Ascending aorta (tissue), 2 donors: ENCODE measurements at regions of chr16 and their contacts with region 1.

Region 1: DNA sequence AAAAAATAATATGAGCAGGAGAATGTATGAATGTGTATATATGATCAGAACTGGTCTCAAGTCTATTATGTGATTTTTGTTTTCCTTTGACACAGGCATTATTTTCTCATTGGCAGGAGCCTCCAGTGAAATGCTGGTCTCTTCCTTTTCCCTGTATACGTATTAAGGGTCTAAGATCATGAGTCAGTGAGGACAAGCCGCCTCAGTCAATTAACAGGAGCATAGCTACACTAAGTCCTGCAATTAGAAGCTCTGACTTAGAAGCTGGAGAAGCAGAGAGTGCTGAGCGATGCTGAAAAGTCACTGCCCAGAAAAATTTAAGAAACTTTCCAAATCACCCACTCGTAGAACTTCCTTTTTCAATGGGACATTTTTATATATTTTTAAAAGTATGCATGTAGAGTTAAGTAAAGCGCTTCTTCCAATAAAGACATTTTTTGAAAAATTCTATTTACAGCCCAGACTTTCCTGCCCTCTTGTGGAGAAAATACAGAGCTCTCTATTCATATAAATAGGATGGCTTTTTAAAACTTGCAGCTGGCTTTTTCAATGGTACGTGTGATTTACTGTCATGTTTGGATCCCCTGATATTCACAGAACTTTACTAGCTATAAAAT is 70.2 kb upstream of the PSMD7 start:
- DNase-seq: no peak
- H3K4me3 ChIP-seq: no peak overlapping the region
- H3K27ac ChIP-seq: no peak overlapping the region
- H3K4me1 ChIP-seq: no peaks in the 10 kb centered on the region
- H3K27me3 ChIP-seq: no peaks in the 10 kb centered on the region
- CTCF ChIP-seq: peak in 2 of 3 experiments; percentile 16 to 23

Region 2: GRCh38 chr16:74064120-74064735 is 162.2 kb before region 1 on chr16:
- intact Hi-C with region 1: loop called (anchors 5 kb)
- DNase-seq: no peak
- H3K4me3 ChIP-seq: no peak overlapping the region
- H3K27ac ChIP-seq: no peak overlapping the region
- H3K4me1 ChIP-seq: no peaks in the 10 kb centered on the region
- H3K27me3 ChIP-seq: no peaks in the 10 kb centered on the region
- CTCF ChIP-seq: no peak

Region 3: GRCh38 chr16:74169687-74170376 is 56.6 kb before region 1 on chr16:
- intact Hi-C with region 1: no loop called
- DNase-seq: no peak
- H3K4me3 ChIP-seq: peak overlapping the region; percentile 7 to 47
- H3K27ac ChIP-seq: no peak overlapping the region
- H3K4me1 ChIP-seq: no peaks in the 10 kb centered on the region
- H3K27me3 ChIP-seq: no peaks in the 10 kb centered on the region
- CTCF ChIP-seq: no peak

Region 4: GRCh38 chr16:74213372-74213771 is 13.1 kb before region 1 on chr16:
- intact Hi-C with region 1: no loop called
- DNase-seq: no peak
- H3K4me3 ChIP-seq: no peak overlapping the region
- H3K27ac ChIP-seq: no peak overlapping the region
- H3K4me1 ChIP-seq: no peaks in the 10 kb centered on the region
- H3K27me3 ChIP-seq: no peaks in the 10 kb centered on the region
- CTCF ChIP-seq: no peak